Cardiac septum (tissue), 1 donor: ENCODE measurements at regions of chr12 and their contacts with region 1.

Region 1: DNA sequence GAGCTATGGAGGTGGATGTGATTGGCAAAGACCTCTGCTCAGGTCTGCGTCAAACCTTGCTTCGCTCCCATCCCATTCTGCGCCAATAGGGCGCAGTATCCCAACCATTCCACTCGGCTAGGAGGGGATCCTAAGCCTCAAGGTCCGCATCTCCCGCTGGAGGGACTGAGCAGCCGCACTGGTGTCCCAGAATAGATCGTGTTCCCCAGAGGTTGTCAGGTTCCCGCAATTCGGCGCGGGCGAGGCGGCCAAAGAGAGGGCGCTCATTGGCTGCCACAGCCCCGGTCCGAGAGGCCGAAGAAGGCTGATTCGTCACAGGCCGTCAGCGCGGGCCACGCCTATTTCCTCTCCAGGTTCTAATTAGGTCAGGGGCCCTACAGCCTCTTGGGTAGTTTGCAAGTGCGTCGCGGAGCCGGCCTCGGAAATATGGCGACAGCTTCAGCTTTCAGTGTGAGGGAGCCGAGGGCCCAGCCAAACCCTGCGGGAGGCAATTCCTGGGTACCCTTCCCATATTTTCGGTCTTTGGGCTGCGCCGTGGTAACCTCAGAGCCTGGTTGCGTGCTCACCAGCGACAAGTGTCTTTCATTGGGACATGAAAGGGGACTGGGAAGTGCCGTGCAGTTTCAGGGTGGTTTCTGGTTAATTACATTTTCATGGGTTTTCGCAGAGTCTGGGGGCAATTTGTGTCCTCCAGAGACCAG is 5.0 kb downstream of the OR10AD1 start:
- DNase-seq: peak; percentile 99

Region 2: DNA sequence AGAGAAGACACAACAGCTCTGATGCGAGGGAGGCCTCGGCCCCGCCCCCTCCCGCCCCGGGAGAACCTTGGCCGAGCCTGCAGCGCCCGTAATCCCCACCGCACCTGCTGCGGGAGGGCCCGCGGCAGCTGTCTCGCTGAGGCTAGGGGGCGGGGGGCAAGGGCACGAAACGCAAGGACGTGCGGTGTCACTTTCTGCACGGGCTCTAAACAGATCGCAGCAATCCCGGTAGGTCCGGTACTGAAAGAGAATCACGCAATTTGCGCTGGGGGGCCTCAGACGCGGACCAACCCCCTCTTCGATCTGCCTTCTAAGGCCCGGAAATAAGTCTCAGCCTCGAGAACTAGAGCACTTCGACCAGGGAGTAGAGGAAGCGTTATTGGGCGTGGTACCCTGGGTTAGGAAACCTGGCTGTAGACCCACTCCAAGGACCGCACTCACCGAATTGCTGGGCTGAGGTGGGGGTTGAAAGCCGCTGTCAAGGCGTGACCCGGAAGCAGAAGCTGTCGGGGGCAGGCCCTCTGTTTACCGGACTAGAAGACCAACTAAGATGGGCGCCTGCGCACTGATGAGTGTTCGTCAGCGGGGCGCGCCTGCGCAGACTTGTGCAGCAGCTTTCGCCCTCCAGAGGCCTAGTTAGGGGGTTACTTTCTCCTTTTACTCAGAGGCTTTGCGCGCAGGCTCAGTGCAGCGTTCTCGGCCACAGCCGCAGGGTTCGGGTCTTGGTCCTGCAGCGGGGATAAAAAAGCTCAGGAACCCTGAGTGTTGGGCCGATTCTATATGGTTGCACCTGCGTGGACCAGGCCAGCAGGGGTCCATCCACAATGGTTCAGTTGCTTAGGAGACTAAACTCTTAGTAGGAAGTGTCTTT is 40.9 kb before region 1 on chr12 and contains the start of gene ASB8:
- intact Hi-C with region 1: loop called (anchors 5 kb)
- DNase-seq: peak; percentile 99
- total RNA-seq, gene ASB8: 69.4 TPM

Region 3: GRCh38 chr12:48350249-48351021 is 152.3 kb after region 1 on chr12 and contains the start of gene ZNF641:
- intact Hi-C with region 1: loop called (anchors 2 kb)
- DNase-seq: peak; percentile 93
- total RNA-seq, gene ZNF641: 15.3 TPM

Region 4: GRCh38 chr12:48442191-48442828 is 244.2 kb after region 1 on chr12:
- intact Hi-C with region 1: loop called (anchors 10 kb)
- DNase-seq: no peak